Ascending aorta (tissue), 2 donors: ENCODE measurements at regions of chr16 and their contacts with region 1.

Region 1: DNA sequence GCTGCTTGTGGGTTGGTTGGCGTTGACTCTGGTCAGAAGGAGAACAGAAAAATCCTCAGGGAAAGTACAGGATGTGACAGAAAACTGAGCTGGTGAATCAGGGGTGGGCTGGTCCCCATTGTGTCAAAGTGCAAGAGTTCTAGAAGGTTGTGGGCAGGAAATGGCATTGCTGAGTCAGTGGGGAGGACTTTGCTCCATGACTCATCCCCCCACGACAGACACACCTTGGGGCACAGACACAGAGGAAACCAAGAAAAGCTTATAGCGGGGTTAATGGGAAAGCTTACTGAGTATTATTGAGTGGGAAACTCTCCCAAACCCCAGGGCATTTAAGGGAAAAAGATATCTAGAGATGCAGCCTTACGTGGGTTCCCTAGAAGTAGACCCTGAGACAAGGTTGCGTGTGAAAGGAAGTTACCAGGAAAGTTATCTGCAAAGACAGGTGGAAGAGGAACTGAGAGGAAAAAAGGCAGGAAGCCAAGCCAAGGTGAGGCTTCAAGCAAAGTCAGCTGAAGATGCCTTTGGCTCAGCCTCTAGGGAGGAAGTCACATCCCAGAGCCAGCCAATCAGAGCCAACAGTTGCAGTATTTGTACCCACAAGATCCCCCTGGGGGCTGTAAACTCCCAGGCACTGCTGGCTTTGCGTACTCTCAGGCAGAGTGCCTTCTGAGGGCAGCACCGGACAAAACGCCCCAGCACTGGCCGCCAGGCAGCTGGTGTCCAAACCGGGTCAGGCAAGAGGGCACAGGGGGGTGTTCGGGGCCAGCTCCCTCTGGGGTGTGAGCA is 86.4 kb downstream of the FOXL1 start:
- DNase-seq: peak in 1 of 2 donors; percentile 90
- H3K4me3 ChIP-seq: no peak overlapping the region
- H3K27ac ChIP-seq: peak overlapping the region; percentile 74 to 75
- H3K4me1 ChIP-seq: peaks cover 9 to 35% of the 10 kb centered on the region in 2 donors
- H3K27me3 ChIP-seq: no peaks in the 10 kb centered on the region
- CTCF ChIP-seq: no peak

Region 2: DNA sequence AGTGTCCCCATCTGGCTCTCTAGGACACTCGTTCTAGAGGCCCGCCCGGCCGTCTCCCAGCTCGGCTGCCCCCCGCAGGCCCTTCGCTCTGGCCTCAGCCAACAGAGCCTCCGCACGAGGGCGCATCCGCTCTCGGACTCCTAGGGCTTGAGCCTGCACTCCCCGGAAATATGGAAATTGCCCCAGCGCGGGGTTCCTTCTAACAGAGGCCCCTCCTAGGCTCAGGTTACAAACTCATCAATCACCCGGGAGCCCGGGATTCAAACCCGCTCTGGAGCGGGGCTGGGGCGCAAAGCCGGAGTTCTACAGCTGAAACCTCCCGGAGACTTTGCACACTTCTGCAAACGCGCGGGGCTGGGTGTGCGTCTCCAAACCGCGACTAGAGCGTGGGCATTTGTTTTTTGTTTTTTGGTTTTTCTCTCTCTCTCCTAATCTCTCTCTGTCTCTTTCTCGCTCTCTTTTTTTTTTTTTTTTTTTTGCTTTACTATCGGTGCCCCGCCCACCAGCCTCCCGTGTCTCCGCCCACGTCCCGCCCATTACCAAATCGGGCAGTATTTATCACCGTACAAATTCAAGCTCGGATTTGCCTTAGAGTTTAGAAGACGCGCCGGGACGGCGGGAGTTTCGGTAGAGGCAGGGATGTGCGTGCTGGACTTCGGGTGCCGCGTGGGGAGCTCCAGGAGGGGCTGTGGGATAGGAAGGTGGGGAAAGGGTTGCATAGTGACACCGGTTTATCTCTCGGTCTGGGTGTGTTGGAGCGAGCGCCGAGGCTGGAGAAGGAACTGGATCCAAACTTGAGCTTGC is 88.8 kb before region 1 on chr16:
- intact Hi-C with region 1: loop called (anchors 2 kb)
- DNase-seq: peak; percentile 75 to 96
- H3K4me3 ChIP-seq: peak overlapping the region; percentile 57 to 79
- H3K27ac ChIP-seq: peak overlapping the region; percentile 91 to 99
- H3K4me1 ChIP-seq: peaks cover 7 to 53% of the 10 kb centered on the region in 2 donors
- H3K27me3 ChIP-seq: no peaks in the 10 kb centered on the region
- CTCF ChIP-seq: peak; percentile 68 to 75 (median 70)

Region 3: GRCh38 chr16:86609115-86609514 is 55.6 kb before region 1 on chr16:
- intact Hi-C with region 1: loop called (anchors 2 kb)
- DNase-seq: no peak
- H3K4me3 ChIP-seq: peak overlapping the region in 1 of 2 donors; percentile 2
- H3K27ac ChIP-seq: peak overlapping the region; percentile 92 to 94
- H3K4me1 ChIP-seq: peaks cover 15 to 48% of the 10 kb centered on the region in 2 donors
- H3K27me3 ChIP-seq: no peaks in the 10 kb centered on the region
- CTCF ChIP-seq: no peak

Region 4: GRCh38 chr16:86680162-86680561 is 15.4 kb after region 1 on chr16:
- intact Hi-C with region 1: loop called (anchors 2 kb)
- DNase-seq: peak in 1 of 2 donors; percentile 87
- H3K4me3 ChIP-seq: peak overlapping the region in 1 of 2 donors; percentile 57
- H3K27ac ChIP-seq: peak overlapping the region; percentile 93 to 94
- H3K4me1 ChIP-seq: peaks cover 3 to 44% of the 10 kb centered on the region in 2 donors
- H3K27me3 ChIP-seq: no peaks in the 10 kb centered on the region
- CTCF ChIP-seq: no peak

Region 5: GRCh38 chr16:86751076-86752030 is 86.6 kb after region 1 on chr16:
- intact Hi-C with region 1: loop called (anchors 5 kb)
- DNase-seq: peak in 1 of 2 donors; percentile 84
- H3K4me3 ChIP-seq: peak overlapping the region in 1 of 2 donors; percentile 27
- H3K27ac ChIP-seq: peak overlapping the region; percentile 80 to 90
- H3K4me1 ChIP-seq: peaks cover 4 to 39% of the 10 kb centered on the region in 2 donors
- H3K27me3 ChIP-seq: no peaks in the 10 kb centered on the region
- CTCF ChIP-seq: no peak